OCI-LY7 (cell line): ENCODE measurements at regions of chr21 and their contacts with region 1.

Region 1: GRCh38 chr21:42537106-42537742 is 23.6 kb downstream of the SLC37A1 start:
- DNase-seq: peak; percentile 79
- H3K4me3 ChIP-seq: peak overlapping the region; percentile 80
- H3K27ac ChIP-seq: peak overlapping the region; percentile 98
- H3K4me1 ChIP-seq: peaks cover 64% of the 10 kb centered on the region
- CTCF ChIP-seq: peak; percentile 94

Region 2: GRCh38 chr21:41868062-41868710 is 669.0 kb before region 1 on chr21:
- CTCF ChIA-PET with region 1: no interaction called
- POLR2A ChIA-PET with region 1: no interaction called
- intact Hi-C with region 1: loop called (anchors 10 kb)
- DNase-seq: peak; percentile 96
- H3K4me3 ChIP-seq: peak overlapping the region; percentile 58
- H3K27ac ChIP-seq: peak overlapping the region; percentile 96
- H3K4me1 ChIP-seq: peaks cover 98% of the 10 kb centered on the region
- CTCF ChIP-seq: no peak

Region 3: DNA sequence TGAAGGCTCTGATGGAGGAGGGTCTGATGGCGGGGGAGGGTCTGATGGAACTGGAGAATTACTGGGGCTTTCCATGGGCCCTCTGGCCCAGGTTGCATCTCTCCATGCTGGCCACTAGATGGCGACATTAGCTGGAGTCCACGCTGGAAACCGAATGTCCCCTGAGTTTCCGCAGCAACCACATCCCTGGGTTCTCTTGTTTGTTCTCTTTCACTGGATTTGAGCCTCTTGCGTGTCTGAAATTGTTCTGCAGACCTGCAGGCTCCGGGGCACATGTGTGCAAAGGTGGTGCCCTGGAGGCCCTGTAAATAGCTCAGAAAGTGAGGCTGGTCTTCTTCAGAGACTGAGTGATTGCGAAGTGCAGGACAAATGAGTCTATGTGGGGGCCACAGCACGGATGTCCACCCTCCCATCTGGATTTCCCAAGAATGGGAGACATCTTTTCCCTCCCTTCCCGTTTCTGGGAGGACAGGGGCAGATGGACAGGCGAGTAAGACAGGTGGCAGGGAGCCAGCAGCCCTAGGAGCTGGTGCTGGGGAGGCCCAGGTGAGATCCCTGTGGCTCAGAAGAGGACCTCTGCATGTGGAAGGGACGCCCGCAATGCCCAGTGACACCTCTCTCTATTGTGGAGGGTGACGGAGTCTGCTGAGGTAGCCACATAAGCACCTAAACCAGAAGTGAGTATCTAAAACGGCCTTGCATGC is 391.5 kb before region 1 on chr21:
- CTCF ChIA-PET with region 1: no interaction called
- POLR2A ChIA-PET with region 1: no interaction called
- intact Hi-C with region 1: loop called (anchors 1 kb)
- DNase-seq: peak; percentile 79
- H3K4me3 ChIP-seq: no peak overlapping the region
- H3K27ac ChIP-seq: no peak overlapping the region
- H3K4me1 ChIP-seq: peaks cover 16% of the 10 kb centered on the region
- CTCF ChIP-seq: peak; percentile 97

Region 4: DNA sequence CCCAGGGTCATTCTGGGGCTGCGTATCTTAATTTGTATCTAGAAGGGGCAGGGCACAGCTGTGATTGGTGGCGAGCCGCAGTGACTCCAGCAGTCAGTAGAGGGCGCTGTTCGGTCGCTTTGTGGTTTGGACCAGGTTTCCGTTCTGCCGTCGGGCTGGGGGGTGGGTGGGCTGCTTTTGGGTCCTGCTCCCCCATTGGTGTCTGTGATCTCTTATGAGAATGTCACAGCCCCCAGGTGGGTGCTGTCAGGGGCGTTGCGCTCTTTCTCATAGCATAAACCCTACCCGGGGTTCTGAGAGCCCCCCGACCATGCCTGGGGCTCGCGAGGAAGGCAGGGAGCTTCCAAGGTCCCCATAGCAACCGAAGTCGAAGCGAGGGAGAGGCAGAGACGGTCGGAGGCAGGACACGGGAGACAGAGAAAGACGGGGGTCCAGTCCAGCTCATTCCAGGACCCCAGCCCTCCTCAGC is 227.4 kb before region 1 on chr21:
- CTCF ChIA-PET with region 1: interaction called, 11 read pairs
- POLR2A ChIA-PET with region 1: no interaction called
- intact Hi-C with region 1: loop called (anchors 2 kb)
- DNase-seq: peak; percentile 73
- H3K4me3 ChIP-seq: no peak overlapping the region
- H3K27ac ChIP-seq: no peak overlapping the region
- H3K4me1 ChIP-seq: peaks cover 15% of the 10 kb centered on the region
- CTCF ChIP-seq: peak; percentile 91

Region 5: DNA sequence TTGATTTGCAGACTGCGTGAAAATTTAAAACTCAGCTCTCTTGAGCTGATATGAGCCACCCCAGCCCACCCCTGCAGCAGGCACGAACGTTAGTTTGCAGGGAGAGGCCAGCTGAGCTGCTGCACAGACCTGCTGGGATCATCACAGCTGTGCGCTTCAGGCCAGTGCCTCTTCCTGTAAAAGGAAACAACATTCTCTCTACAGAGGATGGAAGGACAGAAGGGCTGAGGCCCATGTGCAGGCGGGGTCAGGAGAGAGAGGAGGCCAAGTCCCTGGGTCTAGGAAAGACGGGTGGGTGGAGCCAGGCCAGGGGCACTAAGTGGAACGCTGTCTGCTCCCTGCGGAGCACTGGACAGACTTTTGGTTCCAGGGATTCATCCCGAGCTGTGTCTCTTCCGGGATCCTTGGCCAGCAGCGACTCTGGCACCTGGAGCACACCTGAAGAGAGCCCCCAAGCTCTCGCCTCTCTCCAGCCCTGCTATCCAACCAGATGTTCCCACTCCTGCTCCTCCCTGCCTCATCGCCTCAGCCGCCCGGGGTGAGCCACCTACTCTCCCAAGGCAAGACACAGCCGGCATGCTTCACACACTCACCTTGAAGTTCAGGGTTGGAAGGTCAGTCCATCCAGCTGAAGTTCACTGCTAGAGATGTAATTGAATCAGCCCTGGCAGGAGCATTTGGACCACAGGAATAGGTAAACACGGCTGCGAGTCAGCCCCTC is 83.6 kb before region 1 on chr21:
- CTCF ChIA-PET with region 1: interaction called, 7 read pairs
- POLR2A ChIA-PET with region 1: interaction called, 7 read pairs
- intact Hi-C with region 1: loop called (anchors 1 kb)
- DNase-seq: no peak
- H3K4me3 ChIP-seq: no peak overlapping the region
- H3K27ac ChIP-seq: no peak overlapping the region
- H3K4me1 ChIP-seq: peaks cover 29% of the 10 kb centered on the region
- CTCF ChIP-seq: no peak

Region 6: GRCh38 chr21:42496122-42496900 is 40.9 kb before region 1 on chr21 and contains the start of gene RSPH1:
- CTCF ChIA-PET with region 1: no interaction called
- POLR2A ChIA-PET with region 1: interaction called, 4 read pairs
- intact Hi-C with region 1: loop called (anchors 1 kb)
- DNase-seq: peak; percentile 99
- H3K4me3 ChIP-seq: peak within 1 kb of the TSS; percentile 75
- H3K27ac ChIP-seq: no peak within 1 kb of the TSS
- H3K4me1 ChIP-seq: peaks cover 17% of the 10 kb centered on the region
- CTCF ChIP-seq: peak; percentile 21; the same call in 1 of the 2 replicates
- total RNA-seq, gene RSPH1: 1.9 and 3.9 TPM in 2 replicates

Region 7: GRCh38 chr21:42561762-42562650 is 24.8 kb after region 1 on chr21:
- CTCF ChIA-PET with region 1: interaction called, 10 read pairs
- POLR2A ChIA-PET with region 1: interaction called, 23 read pairs
- intact Hi-C with region 1: loop called (anchors 1 kb)
- DNase-seq: peak; percentile 96
- H3K4me3 ChIP-seq: peak overlapping the region; percentile 68
- H3K27ac ChIP-seq: peak overlapping the region; percentile 96
- H3K4me1 ChIP-seq: peaks cover 56% of the 10 kb centered on the region
- CTCF ChIP-seq: peak; percentile 54

Region 8: DNA sequence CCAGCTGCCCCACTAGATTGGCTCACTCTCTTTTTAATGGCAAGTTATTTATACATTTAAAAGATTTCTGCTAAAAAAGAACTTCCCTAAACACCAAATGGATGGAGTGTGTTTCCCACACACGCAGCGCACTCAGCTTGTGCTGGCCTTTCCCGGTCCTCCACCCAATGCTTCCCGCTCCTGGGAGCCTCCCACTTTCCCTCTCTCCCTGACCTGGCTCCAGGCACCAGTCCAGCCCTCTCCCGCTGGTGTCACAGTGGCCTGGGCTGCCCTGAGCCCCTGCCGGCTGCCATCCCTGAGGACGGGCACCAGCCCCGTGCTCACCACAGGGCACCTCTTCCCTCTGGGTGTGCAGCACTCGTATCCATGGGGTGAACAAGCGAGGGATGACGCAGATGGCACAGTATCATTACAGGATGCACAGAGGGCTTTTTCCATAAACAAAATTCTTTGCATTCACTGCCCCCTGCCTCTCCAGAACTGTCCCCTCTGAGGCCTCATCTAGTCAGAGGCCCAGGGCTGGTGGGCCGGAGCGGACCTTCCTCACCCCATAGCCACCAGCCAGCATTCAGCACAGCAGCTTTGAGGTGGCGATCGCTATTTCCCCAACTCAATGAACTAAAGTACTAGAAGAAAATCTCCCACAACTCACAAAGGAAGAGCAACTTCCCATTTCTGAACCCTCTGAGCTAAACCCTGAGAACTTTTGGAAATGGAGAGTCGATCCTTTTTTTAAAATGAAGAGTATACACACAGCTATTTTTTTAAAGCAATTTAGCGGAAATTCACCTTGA is 45.0 kb after region 1 on chr21:
- CTCF ChIA-PET with region 1: no interaction called
- POLR2A ChIA-PET with region 1: no interaction called
- intact Hi-C with region 1: no loop called
- DNase-seq: no peak
- H3K4me3 ChIP-seq: no peak overlapping the region
- H3K27ac ChIP-seq: no peak overlapping the region
- H3K4me1 ChIP-seq: no peaks in the 10 kb centered on the region
- CTCF ChIP-seq: no peak